ENCODE measurements at regions of chr4 and their contacts with region 1.

Region 1: GRCh38 chr4:87006676-87007527 is 72.1 kb downstream of the AFF1 start:
- DNase-seq: peak; percentile 81
- H3K4me3 Mint-ChIP-seq: peak overlapping the region; percentile 89
- H3K27ac Mint-ChIP-seq: peak overlapping the region; percentile 96
- H3K4me1 Mint-ChIP-seq: peaks cover 50% of the 10 kb centered on the region
- H3K27me3 Mint-ChIP-seq: no peaks in the 10 kb centered on the region

Region 2: GRCh38 chr4:86924811-86925210 is 82.1 kb before region 1 on chr4:
- CTCF ChIA-PET with region 1: interaction called, 8 read pairs
- intact Hi-C with region 1: loop called (anchors 1 kb)
- DNase-seq: no peak
- H3K4me3 Mint-ChIP-seq: no peak overlapping the region
- H3K27ac Mint-ChIP-seq: no peak overlapping the region
- H3K4me1 Mint-ChIP-seq: peaks cover 21% of the 10 kb centered on the region
- H3K27me3 Mint-ChIP-seq: no peaks in the 10 kb centered on the region

Region 3: DNA sequence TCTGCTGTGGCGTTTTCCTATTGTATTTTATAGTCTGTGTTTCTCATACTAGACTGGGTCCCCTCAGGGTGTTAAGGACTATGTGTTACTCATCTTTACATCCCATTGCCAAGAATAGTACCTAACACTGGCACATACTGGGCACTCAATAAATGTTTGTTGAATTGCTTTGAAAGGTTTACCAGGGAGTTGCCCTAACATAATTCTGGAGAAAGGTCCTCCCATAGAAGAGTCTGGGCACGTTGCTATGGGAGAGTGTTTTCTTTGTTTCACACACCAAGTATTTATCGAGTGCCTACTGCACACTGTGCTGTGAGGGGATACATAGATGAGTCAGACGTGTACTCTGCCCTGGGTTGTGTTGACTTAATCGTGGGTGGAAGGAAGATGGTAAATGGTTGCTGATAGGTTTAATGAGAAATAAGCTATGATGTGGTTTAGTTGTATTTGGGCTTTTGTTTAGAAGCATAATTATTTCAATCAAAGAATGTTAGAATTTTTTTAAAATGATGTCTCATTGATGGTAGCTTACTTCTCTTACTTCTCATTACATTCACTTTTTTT is 29.2 kb before region 1 on chr4:
- CTCF ChIA-PET with region 1: no interaction called
- intact Hi-C with region 1: loop called (anchors 1 kb)
- DNase-seq: no peak
- H3K4me3 Mint-ChIP-seq: no peak overlapping the region
- H3K27ac Mint-ChIP-seq: no peak overlapping the region
- H3K4me1 Mint-ChIP-seq: peaks cover 54% of the 10 kb centered on the region
- H3K27me3 Mint-ChIP-seq: no peaks in the 10 kb centered on the region

Region 4: GRCh38 chr4:87073199-87074120 is 66.6 kb after region 1 on chr4:
- CTCF ChIA-PET with region 1: interaction called, 4 read pairs
- intact Hi-C with region 1: loop called (anchors 1 kb)
- DNase-seq: peak; percentile 77
- H3K4me3 Mint-ChIP-seq: peak overlapping the region; percentile 55
- H3K27ac Mint-ChIP-seq: peak overlapping the region; percentile 67
- H3K4me1 Mint-ChIP-seq: peaks cover 44% of the 10 kb centered on the region
- H3K27me3 Mint-ChIP-seq: no peaks in the 10 kb centered on the region

Region 5: GRCh38 chr4:87220094-87220822 is 213.4 kb after region 1 on chr4 and contains the start of gene KLHL8:
- CTCF ChIA-PET with region 1: no interaction called
- intact Hi-C with region 1: loop called (anchors 1 kb)
- DNase-seq: peak; percentile 85
- H3K4me3 Mint-ChIP-seq: peak within 1 kb of the TSS; percentile 84
- H3K27ac Mint-ChIP-seq: peak within 1 kb of the TSS; percentile 82
- H3K4me1 Mint-ChIP-seq: peaks cover 16% of the 10 kb centered on the region
- H3K27me3 Mint-ChIP-seq: no peaks in the 10 kb centered on the region
- total RNA-seq, gene KLHL8: 10.7 to 12.1 TPM

Region 6: DNA sequence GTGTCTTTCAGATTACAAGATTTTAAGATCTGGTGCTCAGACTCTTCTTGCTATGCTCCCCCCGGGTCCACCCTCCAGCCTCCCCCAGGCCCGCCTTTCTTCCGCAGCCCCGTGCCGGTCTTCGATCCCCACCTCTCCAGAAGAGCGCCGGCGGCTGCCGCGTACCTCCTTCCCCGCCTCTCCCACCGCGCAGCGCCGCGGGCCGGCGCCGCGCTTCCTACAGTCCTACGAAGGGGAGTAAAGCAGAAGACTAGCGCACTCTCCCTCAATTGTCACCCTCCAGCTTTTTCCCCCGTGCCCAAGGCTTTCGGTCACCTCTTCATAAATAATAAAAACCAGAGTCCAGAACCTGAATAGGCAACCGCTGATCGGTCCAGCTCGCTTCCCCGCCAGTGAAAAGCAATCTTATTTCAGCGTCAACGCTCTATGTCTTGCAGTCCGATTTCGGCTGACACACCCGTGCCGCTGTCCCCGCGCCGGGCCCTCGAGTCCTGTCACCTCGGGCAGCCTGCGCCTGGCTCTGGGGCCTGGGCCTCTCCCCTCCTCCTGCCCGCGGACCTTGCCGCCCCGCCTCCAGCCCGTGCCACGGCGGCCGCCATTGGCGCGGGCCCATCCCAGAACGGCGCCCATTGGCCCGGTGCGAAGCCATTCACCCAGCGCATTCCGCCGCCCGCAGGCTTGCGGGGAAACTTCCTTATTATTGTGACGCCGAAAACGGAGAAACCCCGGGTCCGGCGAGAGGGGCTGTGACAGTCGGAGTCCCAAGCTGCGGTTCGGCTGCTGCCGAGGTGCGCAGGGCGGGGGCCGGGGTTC is 1585.1 kb after region 1 on chr4 and contains the start of gene HERC3:
- CTCF ChIA-PET with region 1: no interaction called
- intact Hi-C with region 1: loop called (anchors 5 kb)
- DNase-seq: peak; percentile 90
- H3K4me3 Mint-ChIP-seq: peak within 1 kb of the TSS; percentile 98
- H3K27ac Mint-ChIP-seq: peak within 1 kb of the TSS; percentile 83
- H3K4me1 Mint-ChIP-seq: peaks cover 41% of the 10 kb centered on the region
- H3K27me3 Mint-ChIP-seq: no peaks in the 10 kb centered on the region
- total RNA-seq, gene HERC3: 24.4 to 25.8 TPM